HEK293 (cell line): ENCODE measurements at regions of chr13 and their contacts with region 1.

Region 1: GRCh38 chr13:86870444-86870843 is 800.7 kb upstream of the SLITRK5 start:
- H3K4me3 ChIP-seq: no peak overlapping the region
- H3K27ac ChIP-seq: no peak overlapping the region
- H3K4me1 ChIP-seq: no peaks in the 10 kb centered on the region
- CTCF ChIP-seq: no peak

Region 2: DNA sequence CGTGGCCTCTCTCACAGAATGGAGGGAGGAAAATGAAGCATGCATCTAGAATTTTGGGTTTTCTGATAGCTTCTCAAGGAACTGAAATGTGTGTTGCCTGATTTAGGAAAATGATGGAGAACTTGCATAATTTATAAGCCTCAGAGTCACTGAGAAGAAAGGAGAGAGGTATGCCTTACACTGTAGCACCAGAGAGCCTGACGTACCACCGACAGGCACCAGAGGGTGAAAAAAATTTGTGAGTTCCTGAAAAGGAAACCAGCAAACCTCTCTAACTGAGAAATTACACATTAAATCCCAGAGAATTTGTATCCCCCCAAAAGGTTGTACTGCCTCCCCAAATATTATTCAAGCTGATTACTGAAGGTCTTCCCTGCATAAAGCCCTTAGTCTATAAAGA is 155.9 kb before region 1 on chr13:
- CTCF ChIA-PET with region 1: no interaction called
- POLR2A ChIA-PET with region 1: no interaction called
- H3K4me3 ChIP-seq: no peak overlapping the region
- H3K27ac ChIP-seq: no peak overlapping the region
- H3K4me1 ChIP-seq: no peaks in the 10 kb centered on the region
- CTCF ChIP-seq: no peak

Region 3: DNA sequence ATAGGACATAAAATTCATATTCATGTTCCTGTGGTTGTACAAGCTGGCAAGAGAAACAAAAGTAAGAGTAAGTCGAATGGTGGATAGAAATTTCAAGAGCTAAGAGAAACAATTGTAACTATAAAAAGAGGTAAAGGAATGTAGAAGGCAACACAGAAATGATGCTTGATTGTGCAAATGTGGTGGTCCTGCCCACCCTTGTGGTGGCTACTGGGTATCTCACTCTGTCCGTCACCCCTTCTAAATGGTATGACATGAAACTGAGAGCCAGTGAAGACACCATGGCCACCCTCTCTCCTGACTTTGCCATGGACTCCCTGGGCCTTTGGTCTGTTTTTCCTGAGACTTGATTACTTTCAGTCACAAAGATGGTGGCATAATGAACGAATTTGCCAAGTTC is 145.3 kb before region 1 on chr13:
- CTCF ChIA-PET with region 1: no interaction called
- POLR2A ChIA-PET with region 1: no interaction called
- H3K4me3 ChIP-seq: no peak overlapping the region
- H3K27ac ChIP-seq: no peak overlapping the region
- H3K4me1 ChIP-seq: no peaks in the 10 kb centered on the region
- CTCF ChIP-seq: no peak

Region 4: GRCh38 chr13:87274209-87274819 is 403.9 kb after region 1 on chr13:
- CTCF ChIA-PET with region 1: interaction called, 25 read pairs
- POLR2A ChIA-PET with region 1: no interaction called
- H3K4me3 ChIP-seq: no peak overlapping the region
- H3K27ac ChIP-seq: no peak overlapping the region
- H3K4me1 ChIP-seq: no peaks in the 10 kb centered on the region
- CTCF ChIP-seq: no peak